Calu3 (cell line): ENCODE measurements at regions of chr7 and their contacts with region 1.

Region 1: DNA sequence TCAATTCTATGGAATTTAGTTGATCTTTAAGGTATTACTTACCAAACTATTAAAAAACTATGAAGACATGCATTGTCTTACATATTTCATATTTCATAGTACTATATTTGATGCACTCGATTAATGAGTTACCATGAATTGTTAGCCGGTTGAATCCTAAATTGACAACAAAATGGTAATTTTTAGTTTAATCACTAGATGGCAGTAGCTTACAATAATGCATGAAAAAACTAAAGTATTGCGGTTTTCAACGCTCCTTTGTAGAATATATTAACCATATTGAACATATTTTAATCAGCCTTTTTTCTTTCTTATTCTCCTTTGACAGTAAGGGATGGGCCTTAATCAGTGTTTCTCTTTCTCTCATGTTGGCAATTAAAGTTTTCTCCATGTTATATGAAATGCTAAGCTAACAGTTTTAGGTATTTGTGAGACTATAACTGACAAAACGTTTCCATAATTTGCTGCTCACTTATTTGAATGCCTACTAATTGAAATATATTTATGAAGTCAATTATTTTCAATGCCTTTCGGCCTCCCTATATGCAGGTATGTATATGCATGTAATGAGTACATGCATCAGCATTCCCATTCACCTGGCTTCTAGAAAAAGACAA is 48.5 kb upstream of the ARL4A start:
- DNase-seq: no peak
- H3K4me3 Mint-ChIP-seq: no peak overlapping the region
- H3K27ac Mint-ChIP-seq: no peak overlapping the region
- H3K4me1 Mint-ChIP-seq: peaks cover 8% of the 10 kb centered on the region
- H3K27me3 Mint-ChIP-seq: no peaks in the 10 kb centered on the region
- CTCF ChIP-seq: peak; percentile 74

Region 2: GRCh38 chr7:12291870-12292269 is 347.1 kb before region 1 on chr7:
- CTCF ChIA-PET with region 1: no interaction called
- intact Hi-C with region 1: no loop called
- DNase-seq: no peak
- H3K4me3 Mint-ChIP-seq: no peak overlapping the region
- H3K27ac Mint-ChIP-seq: no peak overlapping the region
- H3K4me1 Mint-ChIP-seq: peaks cover 12% of the 10 kb centered on the region
- H3K27me3 Mint-ChIP-seq: no peaks in the 10 kb centered on the region
- CTCF ChIP-seq: peak; percentile 33

Region 3: GRCh38 chr7:12369756-12370155 is 269.2 kb before region 1 on chr7:
- CTCF ChIA-PET with region 1: no interaction called
- intact Hi-C with region 1: no loop called
- DNase-seq: no peak
- H3K4me3 Mint-ChIP-seq: no peak overlapping the region
- H3K27ac Mint-ChIP-seq: no peak overlapping the region
- H3K4me1 Mint-ChIP-seq: peaks cover 11% of the 10 kb centered on the region
- H3K27me3 Mint-ChIP-seq: no peaks in the 10 kb centered on the region
- CTCF ChIP-seq: no peak

Region 4: DNA sequence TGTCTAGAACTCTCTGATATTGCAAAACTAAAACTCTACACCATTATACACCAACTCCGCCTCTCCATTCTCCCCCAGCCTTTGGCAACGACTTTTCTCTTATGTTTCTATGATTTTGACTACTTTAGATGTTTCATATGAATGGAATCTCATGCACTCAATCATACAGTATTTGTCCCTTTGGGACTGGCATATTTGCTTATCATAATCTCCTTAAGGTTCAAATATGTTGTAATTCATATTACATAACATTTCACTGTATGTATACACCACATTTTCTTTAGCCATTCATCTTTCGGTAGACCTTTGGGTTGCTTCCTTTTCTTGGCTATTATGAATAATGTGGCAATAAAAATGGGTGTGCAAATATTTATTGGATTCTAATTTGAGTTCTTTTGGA is 212.9 kb after region 1 on chr7:
- CTCF ChIA-PET with region 1: no interaction called
- intact Hi-C with region 1: no loop called
- DNase-seq: no peak
- H3K4me3 Mint-ChIP-seq: no peak overlapping the region
- H3K27ac Mint-ChIP-seq: no peak overlapping the region
- H3K4me1 Mint-ChIP-seq: no peaks in the 10 kb centered on the region
- H3K27me3 Mint-ChIP-seq: no peaks in the 10 kb centered on the region
- CTCF ChIP-seq: no peak

Region 5: DNA sequence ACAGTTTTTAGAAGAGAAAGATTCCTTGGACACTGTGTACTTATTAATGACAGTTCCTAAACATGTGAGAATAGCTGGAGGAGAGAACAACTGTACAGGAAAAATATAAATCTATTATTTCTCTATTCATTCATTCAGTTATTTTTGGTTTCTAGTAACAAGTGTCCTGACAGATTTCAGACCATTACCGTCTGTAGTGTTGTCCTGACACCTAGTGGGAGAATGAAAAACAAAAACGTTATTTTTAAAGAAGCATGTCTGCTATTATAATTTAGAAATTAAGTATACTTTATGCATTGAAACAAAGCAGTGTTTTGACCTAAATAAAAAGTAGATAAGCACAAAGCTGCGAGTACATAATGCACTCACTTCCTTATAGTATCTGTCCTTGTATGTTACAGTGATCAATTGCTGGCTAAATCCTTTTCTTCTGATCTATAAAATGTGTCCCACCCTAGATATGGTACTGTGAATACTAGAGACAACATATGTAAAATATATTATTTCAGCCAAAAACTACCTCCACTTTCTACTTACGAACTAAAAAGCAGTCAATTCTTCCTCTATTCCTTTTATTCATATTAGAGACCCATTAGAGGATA is 624.1 kb after region 1 on chr7:
- CTCF ChIA-PET with region 1: interaction called, 3 read pairs
- intact Hi-C with region 1: loop called (anchors 1 kb)
- DNase-seq: peak; percentile 25
- H3K4me3 Mint-ChIP-seq: no peak overlapping the region
- H3K27ac Mint-ChIP-seq: no peak overlapping the region
- H3K4me1 Mint-ChIP-seq: no peaks in the 10 kb centered on the region
- H3K27me3 Mint-ChIP-seq: peaks cover 12% of the 10 kb centered on the region
- CTCF ChIP-seq: peak; percentile 74